ENCODE measurements at regions of chr15 and their contacts with region 1.

Region 1: DNA sequence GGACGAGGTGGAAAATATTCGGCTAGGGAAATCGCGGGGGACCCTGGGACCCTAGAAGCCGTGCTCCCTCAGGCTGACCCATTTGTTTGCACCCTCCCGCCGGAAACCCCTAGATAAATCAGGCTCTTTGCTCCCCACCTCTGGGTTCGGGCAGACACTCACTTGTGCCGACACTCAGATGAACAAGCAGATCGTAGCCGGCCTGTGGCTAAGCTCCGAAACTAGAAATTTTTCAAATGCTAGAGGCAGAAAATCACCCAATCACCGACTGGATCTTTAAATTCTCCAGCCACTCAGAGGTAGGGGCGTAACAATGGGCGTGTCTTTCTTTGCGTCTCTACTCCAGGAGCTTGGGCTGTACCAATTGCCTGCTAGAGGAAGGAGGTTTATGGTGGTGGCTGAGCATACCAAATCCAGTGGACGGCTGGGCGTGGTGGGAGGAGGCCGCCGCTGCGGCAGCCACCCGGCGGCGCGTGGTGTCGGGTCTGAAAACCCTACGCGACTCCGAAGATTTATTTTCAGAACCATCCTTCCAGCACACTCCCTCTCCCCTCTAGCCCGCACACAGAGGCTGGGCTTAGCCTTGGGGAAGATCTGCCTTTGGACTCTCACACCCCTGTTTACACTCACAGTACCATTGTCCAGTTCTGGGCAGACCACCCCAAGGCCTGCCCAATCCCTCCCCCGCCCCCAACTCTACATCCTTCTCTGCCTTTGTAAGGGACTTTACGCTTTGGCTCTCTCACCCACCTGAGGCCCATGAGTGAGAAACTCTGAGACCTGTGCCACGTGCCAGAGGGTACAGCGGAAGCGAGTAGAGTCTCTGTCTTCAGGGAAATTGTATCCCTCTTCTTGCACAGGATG is at the start of gene PIF1:
- DNase-seq: peak; percentile 85 to 87
- H3K4me3 ChIP-seq: peak within 1 kb of the TSS; percentile 85 to 93 (median 88)
- H3K27ac ChIP-seq: peak within 1 kb of the TSS; percentile 92
- H3K4me1 ChIP-seq: peaks cover 2 to 9% (median 5%) of the 10 kb centered on the region in 4 experiments; a peak in 6 of 7 replicates
- H3K27me3 ChIP-seq: no peaks in the 10 kb centered on the region
- CTCF ChIP-seq: no peak
- EP300 ChIP-seq: peak in 1 of 2 experiments; percentile 96; a peak in 1 of 3 replicates
- POLR2A ChIP-seq: peak; percentile 84 to 97
- RAD21 ChIP-seq: 0 out of 4 replicates have a peak, but pooled peaks of 1 of the 2 experiments have one; percentile 8
- total RNA-seq, gene PIF1: 136 and 138 TPM in 2 replicates

Region 2: GRCh38 chr15:64478863-64479262 is 346.8 kb before region 1 on chr15:
- CTCF ChIA-PET with region 1: no interaction called
- POLR2A ChIA-PET with region 1: no interaction called
- DNase-seq: no peak
- H3K4me3 ChIP-seq: no peak overlapping the region
- H3K27ac ChIP-seq: no peak overlapping the region
- H3K4me1 ChIP-seq: no peaks in the 10 kb centered on the region; a peak in 2 of 7 replicates
- H3K27me3 ChIP-seq: no peaks in the 10 kb centered on the region
- CTCF ChIP-seq: no peak
- EP300 ChIP-seq: no peak
- POLR2A ChIP-seq: no peak
- RAD21 ChIP-seq: no peak

Region 3: DNA sequence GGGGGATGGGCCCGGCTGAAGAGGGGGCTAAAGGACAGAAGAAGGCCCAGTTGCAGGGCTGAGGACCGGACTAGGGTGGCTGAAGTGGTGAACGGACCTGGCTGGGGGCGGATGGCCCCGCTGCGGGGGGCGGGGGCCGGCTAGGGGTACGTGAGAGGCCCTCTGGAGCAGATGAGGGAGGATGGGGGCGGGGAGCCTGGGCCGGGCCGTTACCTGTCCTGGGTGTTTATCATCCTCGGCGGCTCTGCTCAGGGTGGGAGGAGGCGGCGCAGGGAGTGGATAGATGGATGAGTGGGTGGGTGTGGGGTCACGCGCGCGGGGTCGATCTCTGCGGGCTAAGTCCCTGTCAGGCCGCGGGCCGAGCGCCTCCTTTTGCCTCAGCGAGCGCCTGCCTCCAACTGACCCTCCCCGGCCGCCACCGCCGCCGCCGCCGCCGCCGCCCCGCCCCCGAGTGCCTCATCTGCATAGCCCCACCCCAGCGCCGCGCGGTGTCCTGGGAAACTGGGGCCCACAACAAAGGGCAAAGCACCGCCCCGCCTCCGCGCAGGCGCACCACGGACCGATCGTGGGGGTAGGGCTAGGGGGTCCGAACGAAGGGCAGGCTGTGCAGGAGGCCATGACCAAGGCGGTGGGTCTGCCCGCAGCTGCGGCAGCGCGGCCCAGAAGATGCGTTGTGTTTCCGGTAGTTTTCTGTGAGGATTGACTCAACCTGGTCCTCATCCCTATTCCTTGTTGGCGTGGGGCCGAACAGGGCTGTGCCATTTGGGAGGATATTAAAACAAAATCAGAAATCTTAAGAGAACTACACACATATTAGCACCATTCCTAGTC is 122.6 kb before region 1 on chr15:
- CTCF ChIA-PET with region 1: no interaction called
- POLR2A ChIA-PET with region 1: interaction called, 14 read pairs
- DNase-seq: peak; percentile 86 to 100
- H3K4me3 ChIP-seq: peak overlapping the region; percentile 70 to 88 (median 85)
- H3K27ac ChIP-seq: peak overlapping the region; percentile 82
- H3K4me1 ChIP-seq: peaks cover 12 to 23% (median 17%) of the 10 kb centered on the region in 4 experiments
- H3K27me3 ChIP-seq: no peaks in the 10 kb centered on the region
- CTCF ChIP-seq: no peak
- EP300 ChIP-seq: peak in 1 of 2 experiments; percentile 51; a peak in 1 of 3 replicates
- POLR2A ChIP-seq: peak; percentile 69 to 90
- RAD21 ChIP-seq: no peak; a peak in 1 of 4 replicates

Region 4: GRCh38 chr15:64767203-64767602 is 58.5 kb before region 1 on chr15:
- CTCF ChIA-PET with region 1: interaction called, 883 read pairs
- POLR2A ChIA-PET with region 1: interaction called, 11 read pairs
- DNase-seq: no peak
- H3K4me3 ChIP-seq: no peak overlapping the region
- H3K27ac ChIP-seq: peak overlapping the region; percentile 20; the same call in 1 of the 2 replicates
- H3K4me1 ChIP-seq: peaks cover 8 to 33% (median 17%) of the 10 kb centered on the region in 4 experiments
- H3K27me3 ChIP-seq: no peaks in the 10 kb centered on the region
- CTCF ChIP-seq: no peak
- EP300 ChIP-seq: no peak
- POLR2A ChIP-seq: no peak
- RAD21 ChIP-seq: peak; percentile 5 to 18; a peak in 1 of 4 replicates

Region 5: GRCh38 chr15:64836023-64836536 is 10.4 kb after region 1 on chr15:
- CTCF ChIA-PET with region 1: interaction called, 8 read pairs
- POLR2A ChIA-PET with region 1: interaction called, 381 read pairs
- DNase-seq: no peak
- H3K4me3 ChIP-seq: 0 out of 8 replicates have a peak overlapping the region, but pooled peaks of 1 of the 4 experiments have one; percentile 7
- H3K27ac ChIP-seq: no peak overlapping the region
- H3K4me1 ChIP-seq: peaks cover 0 to 7% (median 4%) of the 10 kb centered on the region in 4 experiments; a peak in 5 of 7 replicates
- H3K27me3 ChIP-seq: no peaks in the 10 kb centered on the region
- CTCF ChIP-seq: no peak
- EP300 ChIP-seq: no peak
- POLR2A ChIP-seq: no peak
- RAD21 ChIP-seq: no peak

Region 6: GRCh38 chr15:64841258-64842095 is 15.8 kb after region 1 on chr15 and contains the start of gene PLEKHO2:
- CTCF ChIA-PET with region 1: interaction called, 8 read pairs
- POLR2A ChIA-PET with region 1: interaction called, 381 read pairs
- DNase-seq: peak; percentile 87 to 94
- H3K4me3 ChIP-seq: peak within 1 kb of the TSS; percentile 90 to 99 (median 92)
- H3K27ac ChIP-seq: peak within 1 kb of the TSS; percentile 59; the same call in 1 of the 2 replicates
- H3K4me1 ChIP-seq: peaks cover 13 to 25% (median 17%) of the 10 kb centered on the region in 4 experiments; a peak in 6 of 7 replicates
- H3K27me3 ChIP-seq: no peaks in the 10 kb centered on the region
- CTCF ChIP-seq: peak; percentile 20 to 30 (median 28); a peak in 2 of 4 replicates
- EP300 ChIP-seq: no peak
- POLR2A ChIP-seq: peak; percentile 63 to 64
- RAD21 ChIP-seq: peak; percentile 11 to 15; a peak in 3 of 4 replicates
- total RNA-seq, gene PLEKHO2: 20.1 and 20.3 TPM in 2 replicates

Region 7: DNA sequence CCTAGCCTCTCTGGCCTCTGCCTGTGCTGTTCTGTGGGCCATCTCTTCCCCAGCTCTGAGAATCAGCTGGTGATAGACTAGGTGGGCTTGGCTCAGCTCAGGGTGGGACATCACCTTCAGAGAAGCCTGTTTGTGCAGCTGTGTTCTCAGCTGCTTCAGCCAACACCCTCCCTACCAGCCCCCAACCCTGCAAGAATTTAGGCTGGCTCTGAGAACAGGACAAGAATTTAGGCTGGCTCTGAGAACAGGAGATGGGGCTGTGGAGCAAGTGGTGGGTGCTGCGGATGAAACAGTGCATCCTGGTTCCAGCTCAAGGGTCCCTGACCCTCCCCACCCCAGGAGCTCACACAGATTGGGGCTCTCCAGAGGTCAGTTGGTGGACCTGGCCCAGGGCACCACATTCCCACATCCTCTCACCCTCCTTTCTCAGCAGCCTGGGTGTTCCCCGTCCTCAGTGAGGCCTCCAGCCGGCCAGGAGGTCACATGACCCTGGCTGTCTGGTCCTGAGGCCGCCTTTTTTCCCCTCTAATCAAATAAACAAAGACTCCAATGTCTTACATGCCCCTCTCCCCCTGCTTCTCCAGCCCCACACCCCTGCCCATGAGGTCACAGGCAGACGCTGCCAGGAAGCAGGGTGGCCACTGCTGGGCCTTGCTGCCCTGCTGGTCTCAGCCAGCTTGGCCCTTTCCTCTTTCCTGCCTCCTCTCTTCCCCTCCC is 30.9 kb after region 1 on chr15:
- CTCF ChIA-PET with region 1: interaction called, 3 read pairs
- POLR2A ChIA-PET with region 1: interaction called, 10 read pairs
- DNase-seq: no peak
- H3K4me3 ChIP-seq: no peak overlapping the region
- H3K27ac ChIP-seq: peak overlapping the region; percentile 63; the same call in 1 of the 2 replicates
- H3K4me1 ChIP-seq: peaks cover 4 to 22% (median 15%) of the 10 kb centered on the region in 4 experiments
- H3K27me3 ChIP-seq: no peaks in the 10 kb centered on the region
- CTCF ChIP-seq: no peak
- EP300 ChIP-seq: no peak
- POLR2A ChIP-seq: no peak
- RAD21 ChIP-seq: peak in 1 of 2 experiments; percentile 31; a peak in 1 of 4 replicates

Measured in H1 (cell line).